Adrenal gland (tissue), 19 donors: ENCODE measurements at regions of chr1 and their contacts with region 1.

Region 1: DNA sequence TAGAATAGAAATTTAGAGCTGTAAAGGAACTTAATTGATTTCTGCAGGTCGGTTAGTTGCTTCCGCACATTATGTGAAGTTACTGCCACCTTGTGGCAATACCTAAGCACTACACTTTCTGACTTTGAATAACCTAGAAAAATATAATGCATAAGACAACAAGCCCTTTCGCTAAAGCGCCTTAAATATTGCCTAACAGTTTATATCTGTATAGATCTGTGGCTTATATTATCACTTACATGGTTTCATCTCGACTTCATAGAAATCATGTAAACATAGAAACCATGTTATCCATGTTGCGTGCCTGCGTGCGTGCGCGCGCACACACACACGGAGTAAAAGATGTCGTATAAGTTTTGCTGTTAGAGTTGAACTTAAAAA is 10.9 kb upstream of the IFI16 start:
- DNase-seq: peak; percentile 54 to 77 (median 65)
- H3K4me3 ChIP-seq: peak overlapping the region in 2 of 4 donors; percentile 14 to 68
- H3K27ac ChIP-seq: peak overlapping the region in 4 of 5 donors; percentile 87 to 99 (median 92)
- H3K4me1 ChIP-seq: peaks cover 5 to 29% of the 10 kb centered on the region in 2 donors
- H3K27me3 ChIP-seq: no peaks in the 10 kb centered on the region
- CTCF ChIP-seq: peak; percentile 85 to 96 (median 94)
- POLR2A ChIP-seq: no peak

Region 2: GRCh38 chr1:158203693-158204457 is 794.9 kb before region 1 on chr1:
- intact Hi-C with region 1: loop called in 1 of 2 experiments (anchors 10 kb)
- DNase-seq: peak in 1 of 7 donors; percentile 51
- H3K4me3 ChIP-seq: no peak overlapping the region
- H3K27ac ChIP-seq: no peak overlapping the region
- H3K4me1 ChIP-seq: no peaks in the 10 kb centered on the region
- H3K27me3 ChIP-seq: no peaks in the 10 kb centered on the region
- CTCF ChIP-seq: peak; percentile 54 to 88 (median 74)
- POLR2A ChIP-seq: no peak

Region 3: GRCh38 chr1:158506369-158506987 is 492.3 kb before region 1 on chr1:
- intact Hi-C with region 1: loop called in 1 of 2 experiments (anchors 10 kb)
- DNase-seq: peak; percentile 22 to 71 (median 31)
- H3K4me3 ChIP-seq: no peak overlapping the region
- H3K27ac ChIP-seq: no peak overlapping the region
- H3K4me1 ChIP-seq: no peaks in the 10 kb centered on the region
- H3K27me3 ChIP-seq: no peaks in the 10 kb centered on the region
- CTCF ChIP-seq: peak in 5 of 6 experiments; percentile 18 to 57 (median 48)
- POLR2A ChIP-seq: no peak

Region 4: GRCh38 chr1:159071970-159072582 is 73.3 kb after region 1 on chr1:
- intact Hi-C with region 1: loop called in 1 of 2 experiments (anchors 5 kb)
- DNase-seq: no peak
- H3K4me3 ChIP-seq: no peak overlapping the region
- H3K27ac ChIP-seq: no peak overlapping the region
- H3K4me1 ChIP-seq: peaks cover 0 to 17% of the 10 kb centered on the region in 2 donors
- H3K27me3 ChIP-seq: no peaks in the 10 kb centered on the region
- CTCF ChIP-seq: peak; percentile 43 to 80 (median 77)
- POLR2A ChIP-seq: no peak

Region 5: DNA sequence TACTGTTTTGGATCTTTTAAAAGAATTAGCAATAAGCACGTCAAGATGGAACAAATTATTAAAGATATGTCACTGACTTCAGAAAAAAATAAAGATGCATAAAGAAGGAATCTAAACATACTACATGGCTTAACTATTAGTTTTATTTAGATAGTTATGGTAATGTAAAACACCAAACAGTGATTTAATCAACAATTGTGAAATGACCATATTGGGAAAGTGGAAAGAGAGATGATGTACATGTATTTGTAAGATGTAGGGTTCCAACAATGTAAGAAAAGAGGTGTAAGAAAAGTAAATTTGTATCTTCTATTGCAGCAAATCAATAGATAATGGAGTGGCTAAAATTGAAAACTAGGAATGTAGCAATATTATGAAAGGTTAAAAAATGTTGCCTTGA is 84.2 kb after region 1 on chr1:
- intact Hi-C with region 1: no loop called
- DNase-seq: no peak
- H3K4me3 ChIP-seq: no peak overlapping the region
- H3K27ac ChIP-seq: no peak overlapping the region
- H3K4me1 ChIP-seq: no peaks in the 10 kb centered on the region
- H3K27me3 ChIP-seq: no peaks in the 10 kb centered on the region
- CTCF ChIP-seq: no peak
- POLR2A ChIP-seq: no peak